Calu3 (cell line): ENCODE measurements at regions of chr12 and their contacts with region 1.

Region 1: GRCh38 chr12:108305520-108305919 is 33.6 kb downstream of the CMKLR1 start:
- DNase-seq: peak; percentile 51
- H3K4me3 Mint-ChIP-seq: no peak overlapping the region
- H3K27ac Mint-ChIP-seq: peak overlapping the region; percentile 19
- H3K4me1 Mint-ChIP-seq: peaks cover 67% of the 10 kb centered on the region
- H3K27me3 Mint-ChIP-seq: no peaks in the 10 kb centered on the region
- CTCF ChIP-seq: no peak

Region 2: DNA sequence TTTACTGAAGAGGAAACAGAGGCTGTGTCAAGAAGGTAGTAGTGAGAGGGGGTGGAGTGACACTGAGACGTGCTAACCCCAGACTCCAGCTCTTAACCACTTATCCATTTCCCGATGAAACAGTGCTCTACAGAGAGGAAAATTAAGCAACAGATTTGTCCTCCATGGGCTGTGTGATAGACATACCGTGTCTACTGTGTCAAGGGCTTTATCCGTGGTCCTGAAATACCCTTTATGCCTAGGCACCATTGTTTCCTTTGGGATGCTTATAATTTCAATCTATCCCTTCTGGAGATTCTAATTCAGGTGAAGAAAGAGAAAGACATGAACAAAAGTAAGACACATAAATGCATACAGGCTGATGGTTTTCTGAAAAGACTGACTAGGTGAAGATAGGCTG is 38.1 kb before region 1 on chr12:
- CTCF ChIA-PET with region 1: no interaction called
- intact Hi-C with region 1: loop called (anchors 1 kb)
- DNase-seq: no peak
- H3K4me3 Mint-ChIP-seq: no peak overlapping the region
- H3K27ac Mint-ChIP-seq: no peak overlapping the region
- H3K4me1 Mint-ChIP-seq: peaks cover 22% of the 10 kb centered on the region
- H3K27me3 Mint-ChIP-seq: peaks cover 43% of the 10 kb centered on the region
- CTCF ChIP-seq: no peak